Left ventricle myocardium inferior (tissue), 1 donor: ENCODE measurements at regions of chr1 and their contacts with region 1.

Region 1: GRCh38 chr1:199243423-199244061 is 604.7 kb downstream of the PTPRC start:
- DNase-seq: peak; percentile 42
- H3K4me3 ChIP-seq: no peak overlapping the region
- H3K27ac ChIP-seq: no peak overlapping the region
- H3K4me1 ChIP-seq: no peaks in the 10 kb centered on the region
- H3K27me3 ChIP-seq: no peaks in the 10 kb centered on the region
- CTCF ChIP-seq: peak; percentile 79

Region 2: GRCh38 chr1:198763298-198763714 is 480.2 kb before region 1 on chr1:
- intact Hi-C with region 1: loop called (anchors 10 kb)
- DNase-seq: no peak
- H3K4me3 ChIP-seq: no peak overlapping the region
- H3K27ac ChIP-seq: no peak overlapping the region
- H3K4me1 ChIP-seq: no peaks in the 10 kb centered on the region
- H3K27me3 ChIP-seq: no peaks in the 10 kb centered on the region
- CTCF ChIP-seq: no peak

Region 3: GRCh38 chr1:199149591-199149990 is 94.0 kb before region 1 on chr1:
- intact Hi-C with region 1: loop called (anchors 10 kb)
- DNase-seq: no peak
- H3K4me3 ChIP-seq: no peak overlapping the region
- H3K27ac ChIP-seq: no peak overlapping the region
- H3K4me1 ChIP-seq: no peaks in the 10 kb centered on the region
- H3K27me3 ChIP-seq: no peaks in the 10 kb centered on the region
- CTCF ChIP-seq: no peak